ENCODE measurements at regions of chr1 and their contacts with region 1.

Region 1: DNA sequence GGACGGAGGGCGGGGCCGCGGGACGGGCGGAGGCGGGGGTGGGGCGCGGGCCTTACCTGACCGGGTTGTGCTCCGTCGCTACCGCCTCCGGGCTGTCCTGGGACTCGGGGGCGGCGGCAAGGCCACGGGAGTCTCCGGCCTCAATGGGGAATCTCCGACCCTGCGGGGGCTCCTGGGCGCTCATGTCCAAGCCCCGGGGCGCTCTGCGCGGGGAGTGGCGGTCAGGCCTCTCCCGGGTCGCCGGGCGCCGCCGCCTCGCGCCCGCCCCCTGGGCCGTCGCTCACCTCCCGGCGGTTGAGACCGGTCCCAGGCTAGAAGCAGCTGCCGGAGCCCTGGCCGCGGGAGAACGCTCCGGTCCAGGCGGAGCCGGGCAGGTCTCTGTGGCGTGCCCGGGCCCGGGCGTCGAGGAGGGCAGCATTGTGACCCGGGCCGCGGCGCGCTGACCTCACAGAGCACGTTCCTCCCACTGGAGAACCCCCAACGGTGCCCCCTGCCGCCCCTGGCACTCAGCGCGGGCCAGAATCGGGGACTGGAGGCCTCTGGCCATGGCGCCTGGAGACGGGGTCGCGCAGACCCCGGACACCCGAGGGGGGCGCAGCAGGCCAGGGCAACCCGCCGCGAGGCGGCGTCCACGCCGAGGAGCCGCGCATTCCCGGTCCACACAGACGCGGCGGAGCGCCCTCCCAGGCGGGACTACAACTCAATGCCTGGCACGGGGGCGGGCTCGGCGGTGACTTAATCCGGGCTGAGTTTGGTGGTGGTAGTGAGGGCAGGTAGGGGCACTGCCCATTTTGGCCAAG is 411 bp downstream of the FAM229A start:
- DNase-seq: peak; percentile 34 to 39 (median 34)
- H3K4me3 ChIP-seq: peak overlapping the region in 5 of 7 experiments; percentile 15 to 64 (median 54)
- H3K27ac ChIP-seq: no peak overlapping the region
- H3K4me1 ChIP-seq: peaks cover 3 to 18% (median 15%) of the 10 kb centered on the region in 4 experiments
- H3K27me3 ChIP-seq: peaks cover 0 to 14% (median 2%) of the 10 kb centered on the region in 5 experiments

Region 2: GRCh38 chr1:32372149-32372756 is 10.4 kb after region 1 on chr1:
- CTCF ChIA-PET with region 1: interaction called, 14 read pairs
- POLR2A ChIA-PET with region 1: interaction called, 7 read pairs
- DNase-seq: peak; percentile 74 to 94 (median 94)
- H3K4me3 ChIP-seq: no peak overlapping the region
- H3K27ac ChIP-seq: no peak overlapping the region
- H3K4me1 ChIP-seq: peaks cover 0 to 16% (median 10%) of the 10 kb centered on the region in 4 experiments
- H3K27me3 ChIP-seq: no peaks in the 10 kb centered on the region